Activated B cell treated with CpG ODN at 0.5 μM for 24 hours (primary cell): ENCODE measurements at regions of chr2 and their contacts with region 1.

Region 1: DNA sequence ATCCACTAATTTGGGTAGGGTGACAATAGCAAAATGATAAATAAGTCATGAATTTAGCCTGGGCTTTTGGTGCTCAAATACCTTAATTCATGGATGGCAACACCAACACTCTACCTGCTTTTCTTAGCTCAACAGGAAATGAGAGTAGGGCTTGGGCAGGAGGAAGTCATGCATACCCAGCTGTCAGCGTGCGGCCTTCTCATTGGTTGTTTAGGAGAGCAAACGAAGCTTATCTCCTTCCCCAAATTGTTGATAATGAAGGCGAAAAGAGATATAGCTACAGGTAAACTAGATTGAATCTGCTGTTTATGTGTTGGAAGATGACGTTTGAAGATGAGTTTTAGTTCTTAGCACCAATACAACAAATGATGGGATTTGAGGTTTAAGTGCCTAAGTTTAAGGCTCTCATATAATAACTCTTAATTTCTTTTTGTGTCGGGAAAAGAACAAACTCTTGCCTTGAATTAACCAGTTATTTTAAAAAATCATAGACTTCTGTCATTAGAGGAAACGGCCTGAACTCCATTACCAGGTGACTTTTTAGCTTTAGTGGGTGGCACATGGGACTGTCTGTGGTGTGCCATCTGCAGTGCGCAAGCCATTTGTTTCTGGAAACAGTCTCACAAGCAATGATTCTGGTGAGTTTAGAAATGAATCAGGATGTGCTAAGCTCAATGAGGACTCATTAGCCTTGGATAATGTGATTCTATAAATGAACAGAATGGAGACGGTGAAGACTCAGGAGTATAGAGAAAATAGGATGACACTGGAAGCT is 19.8 kb downstream of the MAP4K4 start:
- DNase-seq: no peak
- ATAC-seq: peak; percentile 82
- H3K4me3 Mint-ChIP-seq: peak overlapping the region; percentile 72
- H3K27ac Mint-ChIP-seq: peak overlapping the region; percentile 94
- H3K4me1 Mint-ChIP-seq: peaks cover 97% of the 10 kb centered on the region
- H3K27me3 Mint-ChIP-seq: no peaks in the 10 kb centered on the region
- CTCF ChIP-seq: no peak

Region 2: DNA sequence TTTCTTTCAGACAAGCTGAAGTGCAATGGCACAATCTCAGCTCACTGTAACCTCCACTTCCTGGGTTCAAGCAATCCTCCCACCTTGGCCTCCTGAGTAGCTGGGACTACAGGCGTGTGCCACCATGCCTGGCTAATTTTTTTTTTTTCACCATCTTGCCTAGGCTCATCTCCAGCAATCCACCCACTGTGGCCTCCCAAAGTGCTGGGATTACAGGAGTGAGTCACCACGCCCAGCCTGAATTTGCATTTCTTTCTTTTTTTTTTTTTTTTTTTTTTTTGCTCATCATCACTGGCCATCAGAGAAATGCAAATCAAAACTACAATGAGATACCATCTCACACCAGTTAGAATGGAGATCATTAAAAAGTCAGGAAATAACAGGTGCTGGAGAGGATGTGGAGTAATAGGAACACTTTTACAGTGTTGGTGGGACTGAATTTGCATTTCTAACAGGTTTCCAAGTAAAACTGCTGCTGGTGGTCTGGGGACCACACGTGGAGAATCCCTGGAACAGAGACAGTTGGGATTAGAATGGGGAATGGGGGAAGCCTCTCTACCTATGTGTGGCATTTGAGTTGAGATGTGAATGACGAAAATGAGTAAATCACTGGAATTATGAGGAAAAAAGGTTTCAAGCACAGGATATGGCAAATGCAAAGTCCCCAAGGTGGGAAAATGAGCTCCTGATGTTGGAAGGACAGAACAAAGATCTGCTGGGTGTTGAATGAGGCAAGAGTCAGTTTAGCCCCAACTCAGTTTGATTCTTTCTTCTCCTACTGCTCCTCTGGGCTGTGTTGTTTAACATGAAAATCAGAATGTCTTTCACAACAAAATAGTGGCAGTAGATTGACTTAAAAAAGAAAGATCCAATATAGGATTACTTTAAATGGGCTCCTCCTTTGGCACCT is 108.6 kb before region 1 on chr2:
- CTCF ChIA-PET with region 1: no interaction called
- POLR2A ChIA-PET with region 1: no interaction called
- intact Hi-C with region 1: no loop called
- DNase-seq: no peak
- ATAC-seq: no peak
- H3K4me3 Mint-ChIP-seq: no peak overlapping the region
- H3K27ac Mint-ChIP-seq: no peak overlapping the region
- H3K4me1 Mint-ChIP-seq: peaks cover 28% of the 10 kb centered on the region
- H3K27me3 Mint-ChIP-seq: no peaks in the 10 kb centered on the region
- CTCF ChIP-seq: no peak

Region 3: GRCh38 chr2:101692041-101692440 is 25.2 kb before region 1 on chr2:
- CTCF ChIA-PET with region 1: interaction called, 7 read pairs
- POLR2A ChIA-PET with region 1: interaction called, 87 read pairs
- intact Hi-C with region 1: no loop called
- DNase-seq: no peak
- ATAC-seq: no peak
- H3K4me3 Mint-ChIP-seq: no peak overlapping the region
- H3K27ac Mint-ChIP-seq: no peak overlapping the region
- H3K4me1 Mint-ChIP-seq: peaks cover 19% of the 10 kb centered on the region
- H3K27me3 Mint-ChIP-seq: no peaks in the 10 kb centered on the region
- CTCF ChIP-seq: no peak

Region 4: DNA sequence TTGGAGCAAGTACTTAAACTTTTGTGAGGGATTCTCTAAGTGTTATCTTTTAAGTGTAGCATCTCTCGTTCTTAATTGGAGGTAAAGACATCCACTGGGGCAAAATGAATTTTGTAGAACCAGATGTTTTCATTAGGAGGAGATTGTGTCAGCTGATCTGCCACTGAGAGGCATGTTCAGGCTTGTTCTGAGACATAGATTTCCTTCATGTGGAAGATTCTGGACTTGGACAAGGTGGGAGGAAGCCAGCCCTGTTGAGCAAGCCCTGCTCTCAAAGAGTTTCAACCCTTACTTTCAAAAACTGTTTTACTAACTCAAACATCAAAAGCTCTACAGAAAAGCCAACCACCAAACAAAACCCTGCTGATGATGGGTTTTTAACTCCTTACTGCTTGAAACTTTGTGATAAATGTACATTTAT is 13.2 kb before region 1 on chr2:
- CTCF ChIA-PET with region 1: interaction called, 7 read pairs
- POLR2A ChIA-PET with region 1: interaction called, 87 read pairs
- intact Hi-C with region 1: loop called (anchors 1 kb)
- DNase-seq: no peak
- ATAC-seq: peak; percentile 11
- H3K4me3 Mint-ChIP-seq: peak overlapping the region; percentile 75
- H3K27ac Mint-ChIP-seq: peak overlapping the region; percentile 88
- H3K4me1 Mint-ChIP-seq: no peaks in the 10 kb centered on the region
- H3K27me3 Mint-ChIP-seq: no peaks in the 10 kb centered on the region
- CTCF ChIP-seq: no peak

Region 5: DNA sequence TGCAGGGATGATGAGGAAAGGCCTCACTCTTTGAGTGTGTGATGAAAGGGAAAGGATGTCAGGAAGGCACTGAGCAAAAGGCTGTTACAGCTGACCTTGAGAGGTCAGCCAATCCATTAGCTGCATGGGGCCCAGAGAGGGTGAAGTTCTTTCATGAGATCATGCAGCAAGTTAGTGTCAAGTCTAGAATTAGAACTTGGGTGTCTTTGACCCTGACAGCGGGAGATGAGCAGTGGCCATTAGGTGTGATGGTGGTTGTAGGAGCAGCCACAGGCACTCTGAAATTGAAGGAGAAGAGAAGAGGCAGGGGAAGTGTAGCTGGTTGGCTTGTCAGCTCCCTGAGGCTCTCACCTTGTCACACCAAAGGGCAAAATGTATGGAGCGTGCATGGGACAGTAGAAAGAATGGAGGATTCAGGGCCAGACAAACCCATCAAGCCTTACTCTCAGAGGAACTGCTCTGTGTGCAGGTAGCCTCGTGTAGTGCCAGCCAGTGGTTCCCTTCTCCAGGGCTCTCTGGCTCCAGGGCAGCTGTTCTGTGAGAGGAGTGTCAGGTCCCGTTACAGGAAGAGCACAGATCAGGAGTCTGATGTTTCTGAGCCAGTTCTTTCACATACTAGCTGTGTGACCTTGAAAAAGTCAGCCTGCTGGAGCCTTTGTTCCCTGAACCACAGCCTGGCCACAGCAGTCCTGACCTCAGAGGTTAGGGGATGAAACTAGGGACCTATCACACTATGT is 16.2 kb after region 1 on chr2:
- CTCF ChIA-PET with region 1: no interaction called
- POLR2A ChIA-PET with region 1: interaction called, 4 read pairs
- intact Hi-C with region 1: loop called (anchors 2 kb)
- DNase-seq: no peak
- ATAC-seq: no peak
- H3K4me3 Mint-ChIP-seq: no peak overlapping the region
- H3K27ac Mint-ChIP-seq: peak overlapping the region; percentile 12
- H3K4me1 Mint-ChIP-seq: peaks cover 96% of the 10 kb centered on the region
- H3K27me3 Mint-ChIP-seq: no peaks in the 10 kb centered on the region
- CTCF ChIP-seq: no peak

Region 6: DNA sequence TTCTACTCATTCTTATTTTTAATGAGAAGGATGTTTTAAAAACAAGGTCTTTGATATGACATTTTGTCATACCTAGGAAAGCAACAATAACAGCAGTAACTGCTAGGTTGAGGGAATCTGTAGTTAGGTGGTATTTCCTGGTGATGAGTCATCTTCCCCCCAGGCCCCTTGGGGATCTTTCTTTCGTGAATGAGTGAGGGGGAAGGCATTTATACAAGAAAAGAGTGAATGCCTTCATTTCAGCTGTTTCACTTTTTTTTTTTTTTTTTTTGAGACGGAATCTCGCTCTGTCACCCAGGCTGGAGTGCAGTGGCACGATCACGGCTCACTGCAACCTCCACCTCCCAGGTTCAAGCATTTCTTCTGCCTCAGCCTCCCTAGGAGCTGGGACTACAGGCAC is 88.9 kb after region 1 on chr2:
- CTCF ChIA-PET with region 1: no interaction called
- POLR2A ChIA-PET with region 1: interaction called, 4 read pairs
- intact Hi-C with region 1: loop called (anchors 2 kb)
- DNase-seq: peak; percentile 43
- ATAC-seq: peak; percentile 88
- H3K4me3 Mint-ChIP-seq: peak overlapping the region; percentile 66
- H3K27ac Mint-ChIP-seq: peak overlapping the region; percentile 75
- H3K4me1 Mint-ChIP-seq: peaks cover 79% of the 10 kb centered on the region
- H3K27me3 Mint-ChIP-seq: no peaks in the 10 kb centered on the region
- CTCF ChIP-seq: no peak

Region 7: DNA sequence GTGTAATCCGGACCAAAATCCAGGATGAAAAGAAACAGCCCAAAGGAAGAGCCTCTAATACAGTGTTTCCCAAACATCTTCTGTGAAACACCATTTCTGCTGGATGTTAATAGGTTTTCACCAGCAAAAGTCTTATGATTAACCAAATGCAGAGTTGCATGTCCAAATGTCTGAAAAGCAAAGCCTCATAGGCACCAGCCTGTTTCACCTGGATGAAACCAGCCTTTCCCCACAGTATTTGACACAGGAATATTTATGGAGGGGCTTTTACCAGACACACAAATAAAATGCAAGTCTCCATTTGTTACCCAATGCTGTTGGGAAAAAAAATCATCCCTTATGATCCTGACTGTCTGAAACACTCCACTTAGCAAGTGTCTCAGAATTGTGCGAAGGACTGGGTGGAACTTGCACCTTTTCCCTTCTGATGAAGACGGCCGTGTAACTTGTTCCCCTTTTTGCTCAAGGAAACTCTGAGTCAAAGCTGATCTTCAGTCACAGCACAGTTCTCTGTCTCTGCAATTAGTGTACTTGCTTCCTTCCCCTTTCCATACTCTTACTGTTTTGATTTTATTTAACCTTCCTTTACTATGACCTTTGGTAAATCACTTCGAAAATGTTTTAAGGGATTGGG is 204.2 kb after region 1 on chr2:
- CTCF ChIA-PET with region 1: no interaction called
- POLR2A ChIA-PET with region 1: no interaction called
- intact Hi-C with region 1: loop called (anchors 1 kb)
- DNase-seq: no peak
- ATAC-seq: peak; percentile 92
- H3K4me3 Mint-ChIP-seq: peak overlapping the region; percentile 58
- H3K27ac Mint-ChIP-seq: peak overlapping the region; percentile 94
- H3K4me1 Mint-ChIP-seq: peaks cover 22% of the 10 kb centered on the region
- H3K27me3 Mint-ChIP-seq: no peaks in the 10 kb centered on the region
- CTCF ChIP-seq: no peak